ENCODE measurements at regions of chr2 and their contacts with region 1.

Region 1: DNA sequence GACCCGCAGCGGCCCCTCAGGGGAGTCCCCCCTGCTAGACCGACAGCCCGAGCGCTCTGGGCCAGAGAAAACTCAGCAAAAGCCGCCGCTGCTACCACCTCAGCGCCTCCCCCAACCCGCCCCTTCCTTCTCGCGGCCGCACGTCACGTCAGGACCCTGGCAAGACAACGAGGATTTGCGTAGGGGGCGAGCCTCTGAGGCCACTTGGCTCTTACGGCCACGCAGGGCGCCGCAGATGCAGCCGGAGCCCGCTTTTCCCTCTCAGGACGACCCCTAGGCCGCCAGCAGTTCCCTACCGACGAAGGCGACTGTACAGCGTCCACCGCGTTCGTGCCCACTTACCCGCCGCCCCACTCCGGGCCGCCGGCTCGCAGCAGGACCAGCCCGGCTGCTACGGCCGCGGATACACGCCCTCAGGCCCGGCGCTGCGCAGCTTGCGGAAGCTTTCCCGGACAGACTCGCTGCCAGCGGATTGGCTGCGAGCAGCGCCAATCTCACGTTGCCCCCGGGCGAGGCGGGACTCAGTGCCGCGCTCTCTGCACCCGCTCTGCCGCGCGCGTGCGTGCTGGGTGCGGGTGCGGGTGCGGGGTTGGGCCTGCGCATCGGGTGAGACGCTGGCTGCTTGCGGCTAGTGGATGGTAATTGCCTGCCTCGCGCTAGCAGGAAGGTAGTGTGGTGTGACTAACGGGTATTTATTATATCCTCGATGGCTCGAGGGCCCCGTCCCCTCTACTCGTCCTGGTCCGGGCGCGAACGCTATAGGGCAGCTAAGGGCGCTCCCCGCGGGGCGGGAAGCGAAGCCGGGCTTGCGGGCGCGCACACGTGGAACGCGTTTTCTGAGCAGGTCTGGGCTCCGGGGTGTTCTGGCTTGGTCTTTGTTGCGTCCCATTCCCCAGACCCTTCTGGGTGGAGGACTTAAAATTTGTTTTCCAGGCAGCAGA is at the starts of genes ORMDL1 and PMS1:
- DNase-seq: peak; percentile 92 to 94
- ATAC-seq: peak; percentile 92 to 93
- H3K4me3 ChIP-seq: peak within 1 kb of the TSS; percentile 74 to 89 (median 81)
- H3K27ac ChIP-seq: peak within 1 kb of the TSS; percentile 88 to 96 (median 94)
- H3K4me1 ChIP-seq: peaks cover 25 to 33% of the 10 kb centered on the region in 2 donors
- H3K27me3 ChIP-seq: no peaks in the 10 kb centered on the region
- CTCF ChIP-seq: no peak
- POLR2A ChIP-seq: peak; percentile 92 to 94
- total RNA-seq, gene ORMDL1: 13.3 to 38.9 (median 23.7) TPM
- total RNA-seq, gene PMS1: 6.9 to 12.0 (median 8.8) TPM

Region 2: DNA sequence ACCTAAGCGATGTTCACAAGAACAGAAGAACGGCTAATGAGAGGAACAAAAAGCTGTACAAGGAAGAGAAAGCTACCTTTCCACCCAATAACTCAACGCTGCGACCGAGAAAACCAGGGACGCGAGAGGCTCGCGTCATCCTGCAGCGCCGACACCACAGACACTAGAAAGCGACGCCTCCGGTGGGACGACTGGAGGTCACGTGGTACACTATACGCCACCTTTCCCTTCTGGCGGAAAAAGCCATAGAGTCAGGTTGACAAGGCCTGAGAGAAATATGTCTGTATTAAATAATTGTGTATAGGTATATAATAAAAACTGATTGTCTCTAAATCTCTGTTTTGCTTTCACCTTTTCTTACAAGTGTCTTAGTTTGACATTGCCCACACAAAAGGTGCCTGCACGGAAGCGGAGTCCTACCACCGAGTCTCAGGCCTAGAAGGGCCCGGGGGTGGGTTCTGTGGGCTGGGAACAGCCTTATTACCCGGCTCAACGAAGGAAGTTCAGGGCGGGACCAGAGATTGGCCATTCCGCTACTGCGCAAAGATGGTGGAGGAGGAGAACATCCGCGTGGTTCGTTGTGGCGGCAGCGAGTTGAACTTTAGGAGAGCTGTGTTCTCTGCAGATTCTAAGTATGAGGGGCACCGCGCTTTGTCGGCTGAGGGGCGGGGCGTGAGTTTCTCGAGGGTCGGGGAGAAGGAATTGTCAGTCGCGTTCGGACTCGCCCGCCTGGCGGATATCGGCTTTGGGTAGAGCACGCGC is 343.1 kb before region 1 on chr2 and contains the start of gene WDR75:
- in situ Hi-C with region 1: no loop called
- intact Hi-C with region 1: loop called (anchors 5 kb)
- DNase-seq: peak; percentile 89 to 91
- ATAC-seq: peak; percentile 97 to 98
- H3K4me3 ChIP-seq: peak within 1 kb of the TSS; percentile 66 to 95 (median 75)
- H3K27ac ChIP-seq: peak within 1 kb of the TSS; percentile 89 to 92 (median 90)
- H3K4me1 ChIP-seq: peaks cover 23 to 25% of the 10 kb centered on the region in 2 donors
- H3K27me3 ChIP-seq: no peaks in the 10 kb centered on the region
- CTCF ChIP-seq: no peak
- POLR2A ChIP-seq: peak; percentile 63 to 72
- total RNA-seq, gene WDR75: 14.0 to 21.4 (median 16.7) TPM

Region 3: DNA sequence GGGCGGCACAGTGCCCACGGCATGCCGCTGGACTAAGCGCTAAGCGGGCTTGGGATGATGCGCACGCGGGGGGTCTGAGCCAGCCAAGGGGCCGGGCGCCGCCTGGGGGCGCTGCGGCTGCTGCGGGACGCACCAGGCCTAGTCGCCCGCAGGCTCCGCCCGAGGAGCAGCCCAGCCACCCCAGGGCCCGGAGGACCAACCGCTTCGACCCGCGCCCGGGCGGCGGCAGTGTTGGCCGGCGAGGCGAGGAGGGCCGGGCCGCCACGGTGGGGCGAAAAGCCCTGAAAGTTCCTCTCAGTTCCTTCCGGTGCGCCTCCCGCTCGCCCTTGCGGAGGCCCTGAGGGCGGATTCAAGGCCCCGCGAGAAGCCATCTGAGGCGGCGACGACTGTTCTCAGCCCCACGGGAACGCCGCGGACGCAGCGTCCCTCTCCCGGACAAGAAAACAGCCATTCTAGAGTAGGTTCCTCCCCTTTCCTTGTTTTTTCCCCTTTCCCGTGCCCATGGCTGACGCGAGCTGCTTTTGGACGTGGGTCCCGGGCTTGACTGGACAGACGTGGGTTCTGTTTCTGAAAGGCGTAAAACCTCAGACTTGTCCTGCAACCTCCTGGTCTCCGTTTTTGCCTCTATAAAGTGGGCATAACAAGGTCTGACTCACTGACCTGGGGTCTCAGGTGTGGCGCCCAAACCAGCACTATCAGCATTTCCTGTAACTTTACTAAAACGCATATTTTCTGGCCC is 109.7 kb before region 1 on chr2 and contains the start of gene ANKAR:
- in situ Hi-C with region 1: loop called in 1 of 4 experiments (anchors 10 kb)
- intact Hi-C with region 1: no loop called
- DNase-seq: peak; percentile 74 to 89
- ATAC-seq: peak; percentile 88 to 90
- H3K4me3 ChIP-seq: peak within 1 kb of the TSS; percentile 63 to 83 (median 72)
- H3K27ac ChIP-seq: peak within 1 kb of the TSS; percentile 91 to 97 (median 94)
- H3K4me1 ChIP-seq: peaks cover 9 to 20% of the 10 kb centered on the region in 2 donors
- H3K27me3 ChIP-seq: no peaks in the 10 kb centered on the region
- CTCF ChIP-seq: peak; percentile 76 to 97 (median 84)
- POLR2A ChIP-seq: peak; percentile 54 to 56
- total RNA-seq, gene ANKAR: 3.4 to 13.1 (median 5.9) TPM

Region 4: DNA sequence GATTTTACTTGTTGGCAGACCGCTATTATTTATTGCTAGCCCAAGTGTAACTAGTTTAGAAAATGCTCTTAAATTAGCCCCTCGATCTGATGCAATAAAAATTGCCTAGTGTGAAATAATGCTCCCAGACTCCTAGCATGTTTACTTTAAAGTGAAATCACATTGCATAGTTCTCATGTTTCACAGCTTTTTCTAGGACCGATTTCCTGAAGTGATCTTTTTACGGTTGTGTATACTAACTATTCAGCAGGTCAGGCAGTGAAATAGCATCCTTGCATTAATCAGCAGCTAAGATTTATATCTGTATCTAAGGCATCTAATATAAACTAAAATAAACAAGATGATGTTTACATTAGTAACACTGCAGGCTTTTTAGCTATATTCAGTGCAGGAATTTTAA is 52.5 kb after region 1 on chr2:
- in situ Hi-C with region 1: no loop called
- intact Hi-C with region 1: loop called (anchors 5 kb)
- DNase-seq: no peak
- ATAC-seq: peak; percentile 82 to 88
- H3K4me3 ChIP-seq: peak overlapping the region in 2 of 4 donors; percentile 0 to 13
- H3K27ac ChIP-seq: peak overlapping the region; percentile 68 to 76 (median 74)
- H3K4me1 ChIP-seq: peaks cover 19 to 24% of the 10 kb centered on the region in 2 donors
- H3K27me3 ChIP-seq: no peaks in the 10 kb centered on the region
- CTCF ChIP-seq: no peak
- POLR2A ChIP-seq: no peak

Region 5: GRCh38 chr2:190093793-190094192 is 309.6 kb after region 1 on chr2:
- in situ Hi-C with region 1: no loop called
- intact Hi-C with region 1: no loop called
- DNase-seq: peak in 1 of 2 donors; percentile 79
- ATAC-seq: peak; percentile 69 to 91
- H3K4me3 ChIP-seq: peak overlapping the region in 1 of 4 donors; percentile 2
- H3K27ac ChIP-seq: peak overlapping the region; percentile 23 to 62 (median 46)
- H3K4me1 ChIP-seq: peaks cover 0 to 11% of the 10 kb centered on the region in 2 donors
- H3K27me3 ChIP-seq: no peaks in the 10 kb centered on the region
- CTCF ChIP-seq: no peak
- POLR2A ChIP-seq: no peak

Region 6: DNA sequence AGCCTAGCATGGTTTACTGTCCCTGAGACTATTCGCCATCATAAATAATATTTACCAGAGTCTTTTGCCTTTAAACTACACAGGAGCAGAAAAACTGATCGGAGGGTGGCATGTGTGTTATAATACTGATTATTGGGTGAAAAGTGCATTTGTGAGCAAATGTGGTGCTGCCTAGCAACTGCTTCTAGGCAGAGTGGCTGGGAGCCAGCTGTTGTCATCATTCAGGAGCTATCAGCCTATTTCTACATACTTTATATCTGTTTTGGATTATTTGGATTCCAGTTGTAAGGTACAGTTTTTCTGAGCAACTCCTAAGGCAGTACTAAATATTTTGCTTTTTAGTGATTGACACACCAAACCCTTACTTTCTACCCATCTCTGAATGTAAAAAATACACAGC is 353.4 kb after region 1 on chr2:
- in situ Hi-C with region 1: no loop called
- intact Hi-C with region 1: no loop called
- DNase-seq: no peak
- ATAC-seq: no peak
- H3K4me3 ChIP-seq: no peak overlapping the region
- H3K27ac ChIP-seq: no peak overlapping the region
- H3K4me1 ChIP-seq: no peaks in the 10 kb centered on the region
- H3K27me3 ChIP-seq: no peaks in the 10 kb centered on the region
- CTCF ChIP-seq: no peak
- POLR2A ChIP-seq: no peak

Region 7: DNA sequence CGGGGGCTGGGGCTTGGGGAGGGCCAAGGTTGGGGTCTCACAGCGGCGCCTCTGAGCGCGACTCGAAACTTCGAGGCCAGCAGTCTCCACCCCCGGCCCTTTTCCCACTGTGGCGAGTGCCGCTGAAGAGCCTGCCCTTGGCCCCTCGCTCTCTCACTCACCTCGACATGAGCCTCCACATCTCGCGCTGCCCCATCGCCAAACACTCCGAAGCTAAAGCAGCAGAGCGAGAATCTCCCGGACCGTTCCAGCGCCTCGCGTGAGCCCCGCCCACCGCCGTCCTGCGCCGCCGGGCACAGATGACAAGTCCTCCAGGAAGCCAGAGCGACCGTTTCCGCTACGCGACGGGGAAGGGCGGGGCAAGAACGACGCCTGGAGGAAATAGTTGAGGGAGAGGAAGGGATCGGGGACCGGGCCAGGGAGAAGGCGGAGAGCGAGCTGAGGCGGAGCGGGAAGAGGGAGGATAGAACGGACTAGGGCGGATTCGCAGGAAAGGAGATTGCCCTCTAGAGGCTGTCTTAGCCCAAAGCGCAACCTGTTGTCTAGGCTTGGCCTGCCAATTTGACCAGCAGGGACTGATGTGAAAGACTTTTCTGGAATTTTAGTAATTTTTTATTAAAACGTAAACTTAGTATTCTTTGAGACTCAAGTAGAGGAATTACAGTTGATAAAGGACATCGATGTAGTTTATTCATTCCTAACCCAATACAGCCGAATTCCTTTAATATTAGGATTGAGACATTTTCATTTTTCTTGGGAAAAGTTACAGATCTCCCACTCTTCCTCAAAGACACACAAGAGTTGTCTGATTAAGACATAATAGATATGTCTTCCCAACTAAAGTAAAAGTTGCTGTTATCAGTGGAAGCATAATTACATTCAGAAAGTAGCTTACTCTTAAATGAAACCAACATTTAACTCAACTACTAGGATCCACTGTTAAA is 535.6 kb after region 1 on chr2 and contains the start of gene HIBCH:
- in situ Hi-C with region 1: no loop called
- intact Hi-C with region 1: loop called (anchors 10 kb)
- DNase-seq: peak; percentile 95 to 98
- ATAC-seq: peak; percentile 98
- H3K4me3 ChIP-seq: peak within 1 kb of the TSS; percentile 62 to 81 (median 70)
- H3K27ac ChIP-seq: peak within 1 kb of the TSS; percentile 83 to 91 (median 89)
- H3K4me1 ChIP-seq: peaks cover 14 to 19% of the 10 kb centered on the region in 2 donors
- H3K27me3 ChIP-seq: no peaks in the 10 kb centered on the region
- CTCF ChIP-seq: peak; percentile 40 to 78 (median 49)
- POLR2A ChIP-seq: peak; percentile 59 to 76
- total RNA-seq, gene HIBCH: 3.7 to 20.1 (median 10.6) TPM